ENCODE measurements at regions of chr19 and their contacts with region 1.

Region 1: GRCh38 chr19:54463531-54464043 is at the start of gene LENG9:
- DNase-seq: peak; percentile 100
- H3K4me3 Mint-ChIP-seq: peak within 1 kb of the TSS; percentile 84
- H3K27ac Mint-ChIP-seq: peak within 1 kb of the TSS; percentile 92
- H3K4me1 Mint-ChIP-seq: peaks cover 21% of the 10 kb centered on the region
- H3K27me3 Mint-ChIP-seq: peaks cover 13% of the 10 kb centered on the region
- total RNA-seq, gene LENG9: 5.7 to 7.1 TPM

Region 2: GRCh38 chr19:54115109-54116063 is 348.2 kb before region 1 on chr19 and contains the starts of genes PRPF31 and TFPT:
- CTCF ChIA-PET with region 1: no interaction called
- intact Hi-C with region 1: loop called (anchors 5 kb)
- DNase-seq: peak; percentile 99
- H3K4me3 Mint-ChIP-seq: peak within 1 kb of the TSS; percentile 90
- H3K27ac Mint-ChIP-seq: peak within 1 kb of the TSS; percentile 97
- H3K4me1 Mint-ChIP-seq: peaks cover 30% of the 10 kb centered on the region
- H3K27me3 Mint-ChIP-seq: no peaks in the 10 kb centered on the region
- total RNA-seq, gene PRPF31: 67.5 to 71.8 TPM
- total RNA-seq, gene TFPT: 17.0 to 17.3 TPM

Region 3: GRCh38 chr19:54189735-54190502 is 273.7 kb before region 1 on chr19:
- CTCF ChIA-PET with region 1: no interaction called
- intact Hi-C with region 1: loop called (anchors 1 kb)
- DNase-seq: peak; percentile 100
- H3K4me3 Mint-ChIP-seq: peak overlapping the region; percentile 82
- H3K27ac Mint-ChIP-seq: peak overlapping the region; percentile 96
- H3K4me1 Mint-ChIP-seq: peaks cover 31% of the 10 kb centered on the region
- H3K27me3 Mint-ChIP-seq: no peaks in the 10 kb centered on the region

Region 4: DNA sequence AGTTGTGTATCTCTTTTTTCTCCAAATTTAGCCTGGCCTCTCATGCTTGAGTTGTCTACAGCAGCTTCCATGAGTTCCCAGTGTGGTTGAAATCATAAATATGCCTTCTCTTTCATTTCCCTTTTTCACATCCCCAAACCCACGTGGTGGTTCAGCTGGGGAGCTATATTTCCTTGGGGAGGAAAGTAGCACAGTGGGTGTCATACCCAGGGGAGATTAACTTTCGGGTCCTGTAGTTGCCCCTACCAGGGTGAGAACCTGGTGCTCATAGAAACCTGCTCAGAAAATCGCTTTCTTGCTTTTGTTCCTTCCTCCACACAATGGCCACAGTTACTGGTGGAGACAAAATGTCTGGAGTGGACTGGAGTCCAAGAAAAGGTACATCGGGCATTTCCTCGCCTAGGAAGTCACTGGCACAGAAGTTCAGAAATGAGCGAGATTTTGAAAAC is 117.6 kb before region 1 on chr19:
- CTCF ChIA-PET with region 1: no interaction called
- intact Hi-C with region 1: no loop called
- DNase-seq: no peak
- H3K4me3 Mint-ChIP-seq: no peak overlapping the region
- H3K27ac Mint-ChIP-seq: no peak overlapping the region
- H3K4me1 Mint-ChIP-seq: no peaks in the 10 kb centered on the region
- H3K27me3 Mint-ChIP-seq: no peaks in the 10 kb centered on the region

Region 5: DNA sequence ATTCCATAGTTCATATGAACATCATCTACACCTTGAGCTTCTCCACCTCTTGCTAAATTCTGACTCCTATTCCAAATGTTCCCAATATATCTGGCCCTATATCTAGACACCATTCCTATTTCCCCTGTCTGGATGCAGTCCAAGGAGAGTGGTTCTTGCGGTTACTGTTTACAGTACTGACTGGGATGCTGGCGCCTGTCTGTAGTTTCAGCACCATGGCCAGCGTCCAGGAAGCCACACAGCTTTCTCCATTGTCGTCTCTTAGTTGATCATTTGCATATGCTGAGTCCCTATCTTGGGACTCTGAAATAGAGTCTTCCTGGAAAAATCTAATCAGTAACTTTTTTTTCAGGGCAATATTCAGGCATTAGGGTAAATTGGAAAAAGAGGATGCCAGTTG is 53.9 kb after region 1 on chr19:
- CTCF ChIA-PET with region 1: no interaction called
- intact Hi-C with region 1: no loop called
- DNase-seq: peak; percentile 84
- H3K4me3 Mint-ChIP-seq: no peak overlapping the region
- H3K27ac Mint-ChIP-seq: no peak overlapping the region
- H3K4me1 Mint-ChIP-seq: peaks cover 42% of the 10 kb centered on the region
- H3K27me3 Mint-ChIP-seq: peaks cover 5% of the 10 kb centered on the region

Region 6: GRCh38 chr19:54532528-54532927 is 68.9 kb after region 1 on chr19:
- CTCF ChIA-PET with region 1: no interaction called
- intact Hi-C with region 1: no loop called
- DNase-seq: peak; percentile 6
- H3K4me3 Mint-ChIP-seq: no peak overlapping the region
- H3K27ac Mint-ChIP-seq: no peak overlapping the region
- H3K4me1 Mint-ChIP-seq: peaks cover 9% of the 10 kb centered on the region
- H3K27me3 Mint-ChIP-seq: peaks cover 57% of the 10 kb centered on the region

Region 7: GRCh38 chr19:55117636-55118391 is 654.2 kb after region 1 on chr19 and contains the start of gene PPP1R12C:
- CTCF ChIA-PET with region 1: no interaction called
- intact Hi-C with region 1: loop called (anchors 2 kb)
- DNase-seq: peak; percentile 99
- H3K4me3 Mint-ChIP-seq: peak within 1 kb of the TSS; percentile 98
- H3K27ac Mint-ChIP-seq: peak within 1 kb of the TSS; percentile 90
- H3K4me1 Mint-ChIP-seq: peaks cover 23% of the 10 kb centered on the region
- H3K27me3 Mint-ChIP-seq: peaks cover 2% of the 10 kb centered on the region
- total RNA-seq, gene PPP1R12C: 41.2 to 42.1 TPM

Region 8: GRCh38 chr19:55339048-55339888 is 875.7 kb after region 1 on chr19 and contains the start of gene KMT5C:
- CTCF ChIA-PET with region 1: no interaction called
- intact Hi-C with region 1: loop called (anchors 2 kb)
- DNase-seq: peak; percentile 100
- H3K4me3 Mint-ChIP-seq: peak within 1 kb of the TSS; percentile 90
- H3K27ac Mint-ChIP-seq: peak within 1 kb of the TSS; percentile 92
- H3K4me1 Mint-ChIP-seq: peaks cover 12% of the 10 kb centered on the region
- H3K27me3 Mint-ChIP-seq: no peaks in the 10 kb centered on the region
- total RNA-seq, gene KMT5C: 45.9 to 47.1 TPM

Region 9: GRCh38 chr19:55599468-55600279 is 1136.1 kb after region 1 on chr19 and contains the start of gene FIZ1:
- CTCF ChIA-PET with region 1: no interaction called
- intact Hi-C with region 1: loop called (anchors 1 kb)
- DNase-seq: peak; percentile 98
- H3K4me3 Mint-ChIP-seq: peak within 1 kb of the TSS; percentile 88
- H3K27ac Mint-ChIP-seq: peak within 1 kb of the TSS; percentile 99
- H3K4me1 Mint-ChIP-seq: peaks cover 31% of the 10 kb centered on the region
- H3K27me3 Mint-ChIP-seq: no peaks in the 10 kb centered on the region
- total RNA-seq, gene FIZ1: 12.8 to 14.8 TPM